AG04450 (cell line): ENCODE measurements at regions of chr17 and their contacts with region 1.

Region 1: GRCh38 chr17:29931231-29931932 is 1.4 kb upstream of the SSH2 start:
- DNase-seq: peak; percentile 51
- H3K4me3 ChIP-seq: no peak overlapping the region; the same call in 1 of the 2 replicates
- H3K27ac ChIP-seq: no peak overlapping the region
- H3K27me3 ChIP-seq: no peaks in the 10 kb centered on the region
- CTCF ChIP-seq: peak; percentile 96

Region 2: DNA sequence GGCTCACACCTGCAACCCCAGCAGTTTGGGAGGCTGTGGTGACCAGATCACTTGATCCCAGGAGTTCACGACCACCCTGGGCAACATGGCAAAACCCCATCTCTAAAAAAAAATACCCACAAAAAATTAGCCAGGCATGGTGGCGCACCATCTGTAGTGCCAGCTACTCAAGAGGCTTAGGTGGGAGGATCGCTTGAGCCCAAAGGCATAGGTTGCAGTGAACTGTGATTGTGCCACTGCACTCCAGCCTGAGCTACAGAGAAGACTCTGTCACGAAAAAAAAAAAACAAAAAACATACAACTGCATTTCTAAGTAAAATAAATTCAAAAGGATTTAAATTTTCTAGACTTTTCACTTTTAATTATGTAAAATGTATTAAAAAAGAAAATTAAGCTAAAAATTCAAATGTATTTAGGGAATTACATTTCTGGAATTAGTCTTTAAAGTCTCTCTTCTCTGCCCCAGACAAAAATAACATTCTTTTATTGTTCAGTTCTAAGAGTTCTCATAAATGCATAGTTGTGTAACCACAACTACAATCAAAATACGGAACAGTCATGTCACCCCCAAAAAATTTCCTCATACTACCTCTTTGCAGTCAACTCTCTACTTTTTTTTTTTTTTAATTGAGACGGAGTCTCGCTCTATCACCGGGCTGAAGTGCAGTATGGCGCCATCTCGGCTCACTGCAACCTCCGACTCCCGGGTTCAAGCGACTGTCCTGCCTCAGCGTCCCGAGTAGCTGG is 1102.9 kb before region 1 on chr17:
- CTCF ChIA-PET with region 1: no interaction called
- POLR2A ChIA-PET with region 1: no interaction called
- DNase-seq: no peak
- H3K4me3 ChIP-seq: no peak overlapping the region
- H3K27ac ChIP-seq: no peak overlapping the region
- H3K27me3 ChIP-seq: no peaks in the 10 kb centered on the region
- CTCF ChIP-seq: no peak

Region 3: GRCh38 chr17:29617125-29617480 is 314.3 kb before region 1 on chr17:
- CTCF ChIA-PET with region 1: interaction called, 18 read pairs
- POLR2A ChIA-PET with region 1: no interaction called
- DNase-seq: no peak
- H3K4me3 ChIP-seq: no peak overlapping the region
- H3K27ac ChIP-seq: no peak overlapping the region
- H3K27me3 ChIP-seq: no peaks in the 10 kb centered on the region
- CTCF ChIP-seq: peak; percentile 65

Region 4: DNA sequence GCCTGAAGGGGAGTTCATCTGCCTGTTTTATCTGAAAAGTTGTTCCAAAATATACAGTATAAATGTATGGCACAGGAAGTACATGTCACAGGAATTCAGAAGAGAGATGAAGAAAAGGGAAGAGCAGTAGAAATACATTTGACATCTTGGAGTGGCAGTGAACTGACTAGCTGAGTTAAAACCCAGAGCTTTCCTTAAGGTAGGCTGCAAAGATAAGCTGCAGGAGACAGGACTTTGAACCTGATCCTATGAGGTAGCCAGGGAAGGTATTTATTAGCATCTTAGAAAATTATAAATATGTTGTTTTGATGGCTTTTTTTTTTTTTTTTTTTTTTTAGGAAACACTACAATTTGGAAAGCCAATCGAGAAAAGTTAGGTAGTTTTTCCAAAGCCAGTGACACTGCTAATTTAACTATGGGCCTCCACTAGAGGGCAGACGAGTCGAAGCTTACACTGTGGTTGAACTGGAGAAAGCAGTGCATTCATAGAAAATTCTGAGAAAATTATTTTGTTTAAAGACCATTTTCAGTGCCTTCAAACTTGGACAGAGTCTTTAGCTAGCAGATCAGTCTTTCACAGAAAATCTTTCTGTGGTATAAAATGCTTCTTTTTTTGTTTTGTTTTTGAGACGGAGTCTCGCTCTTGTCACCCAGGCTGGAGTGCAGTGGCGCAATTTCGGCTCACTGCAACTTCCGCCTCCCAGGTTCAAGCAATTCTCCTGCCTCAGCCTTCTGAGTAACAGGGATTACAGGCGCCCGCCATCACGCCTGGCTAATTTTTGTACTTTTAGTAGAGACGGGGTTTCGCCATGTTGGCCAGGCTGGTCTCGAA is 123.6 kb before region 1 on chr17:
- CTCF ChIA-PET with region 1: interaction called, 331 read pairs
- POLR2A ChIA-PET with region 1: interaction called, 27 read pairs
- DNase-seq: peak; percentile 42
- H3K4me3 ChIP-seq: no peak overlapping the region
- H3K27ac ChIP-seq: peak overlapping the region; percentile 54
- H3K27me3 ChIP-seq: no peaks in the 10 kb centered on the region
- CTCF ChIP-seq: peak; percentile 74

Region 5: GRCh38 chr17:29867643-29868181 is 63.7 kb before region 1 on chr17:
- CTCF ChIA-PET with region 1: interaction called, 25 read pairs
- POLR2A ChIA-PET with region 1: no interaction called
- DNase-seq: no peak
- H3K4me3 ChIP-seq: no peak overlapping the region
- H3K27ac ChIP-seq: no peak overlapping the region
- H3K27me3 ChIP-seq: no peaks in the 10 kb centered on the region
- CTCF ChIP-seq: peak; percentile 22; the same call in 1 of the 2 replicates

Region 6: DNA sequence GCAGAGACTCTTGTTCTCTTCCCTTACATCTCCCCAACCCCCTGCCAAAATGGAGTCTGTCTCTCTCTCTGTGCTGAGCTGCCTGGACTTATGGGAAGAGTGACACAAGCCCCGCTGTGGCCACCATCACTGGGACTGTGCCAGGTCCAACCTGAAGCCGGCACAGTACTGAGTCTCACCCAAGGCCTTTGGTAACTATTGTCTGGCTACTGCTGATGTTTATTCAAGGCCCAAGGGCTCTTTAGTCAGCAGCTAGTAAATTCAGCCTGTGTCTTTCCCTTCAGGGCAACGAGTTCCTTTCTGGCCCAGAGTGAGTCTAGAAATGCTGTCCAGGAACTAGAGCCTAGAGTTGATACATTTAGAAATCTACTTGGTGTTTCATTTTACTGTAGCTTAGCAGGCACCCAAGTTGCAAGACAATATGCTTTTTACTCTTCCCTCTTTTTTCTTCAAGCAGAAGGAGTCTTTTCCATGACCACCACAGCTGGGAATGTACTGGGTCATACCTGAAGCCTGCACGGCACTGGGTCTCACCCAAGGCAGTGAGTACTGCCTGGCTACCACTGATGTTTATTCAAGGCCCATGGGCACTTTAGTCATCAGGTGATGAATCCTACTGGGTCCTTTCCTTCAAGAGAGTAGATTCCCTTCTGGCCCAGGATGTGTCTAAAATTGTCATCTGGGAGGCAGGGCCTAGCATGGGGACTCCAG is 27.7 kb after region 1 on chr17:
- CTCF ChIA-PET with region 1: interaction called, 10 read pairs
- POLR2A ChIA-PET with region 1: no interaction called
- DNase-seq: no peak
- H3K4me3 ChIP-seq: no peak overlapping the region
- H3K27ac ChIP-seq: no peak overlapping the region
- H3K27me3 ChIP-seq: no peaks in the 10 kb centered on the region
- CTCF ChIP-seq: no peak

Region 7: DNA sequence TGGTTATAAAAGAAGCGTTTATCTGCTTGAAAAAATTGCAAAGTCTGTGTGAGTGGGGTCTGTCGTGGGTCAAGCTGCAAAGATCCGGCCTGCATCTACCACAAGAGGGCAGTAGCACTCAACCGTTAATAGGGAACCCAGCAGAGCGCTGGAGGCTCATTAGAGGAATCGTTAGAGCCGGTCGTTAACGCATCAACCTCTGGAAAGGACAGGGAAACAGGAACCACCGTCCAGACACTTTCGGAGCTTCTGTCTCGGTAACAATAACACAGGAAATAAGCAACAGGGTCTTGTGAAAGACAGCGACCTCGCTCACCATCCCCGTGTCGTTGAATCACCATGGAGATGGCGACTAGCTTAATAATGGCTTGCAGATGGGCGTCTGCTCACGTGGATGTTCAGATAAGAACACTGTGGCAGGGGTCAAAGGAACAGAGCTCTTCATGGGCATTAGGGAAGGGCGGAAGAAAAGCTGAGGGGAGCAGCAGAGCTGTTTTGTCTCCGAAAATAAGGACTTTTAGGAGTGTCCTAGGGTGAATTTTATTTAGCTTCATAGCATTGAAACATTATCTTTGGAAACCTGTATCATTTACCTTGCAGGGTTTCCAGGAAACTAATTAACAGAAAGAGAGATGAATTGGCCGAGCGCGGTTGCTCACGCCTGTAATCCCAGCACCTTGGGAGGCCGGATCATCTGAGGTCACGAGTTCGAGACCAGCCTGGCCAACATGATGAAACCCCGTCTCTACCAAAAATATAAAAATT is 173.4 kb after region 1 on chr17:
- CTCF ChIA-PET with region 1: interaction called, 11 read pairs
- POLR2A ChIA-PET with region 1: no interaction called
- DNase-seq: peak; percentile 41
- H3K4me3 ChIP-seq: peak overlapping the region; percentile 63
- H3K27ac ChIP-seq: no peak overlapping the region
- H3K27me3 ChIP-seq: peaks cover 3% of the 10 kb centered on the region
- CTCF ChIP-seq: peak; percentile 94